ENCODE measurements at regions of chr5 and their contacts with region 1.

Region 1: GRCh38 chr5:172417983-172418630 is 36.2 kb downstream of the SH3PXD2B start:
- DNase-seq: peak; percentile 20
- ATAC-seq: no peak
- H3K4me3 ChIP-seq: no peak overlapping the region
- H3K27ac ChIP-seq: peak overlapping the region; percentile 5
- H3K4me1 ChIP-seq: peaks cover 81% of the 10 kb centered on the region
- H3K27me3 ChIP-seq: no peaks in the 10 kb centered on the region
- CTCF ChIP-seq: no peak
- EP300 ChIP-seq: no peak
- POLR2A ChIP-seq: no peak
- RAD21 ChIP-seq: no peak

Region 2: DNA sequence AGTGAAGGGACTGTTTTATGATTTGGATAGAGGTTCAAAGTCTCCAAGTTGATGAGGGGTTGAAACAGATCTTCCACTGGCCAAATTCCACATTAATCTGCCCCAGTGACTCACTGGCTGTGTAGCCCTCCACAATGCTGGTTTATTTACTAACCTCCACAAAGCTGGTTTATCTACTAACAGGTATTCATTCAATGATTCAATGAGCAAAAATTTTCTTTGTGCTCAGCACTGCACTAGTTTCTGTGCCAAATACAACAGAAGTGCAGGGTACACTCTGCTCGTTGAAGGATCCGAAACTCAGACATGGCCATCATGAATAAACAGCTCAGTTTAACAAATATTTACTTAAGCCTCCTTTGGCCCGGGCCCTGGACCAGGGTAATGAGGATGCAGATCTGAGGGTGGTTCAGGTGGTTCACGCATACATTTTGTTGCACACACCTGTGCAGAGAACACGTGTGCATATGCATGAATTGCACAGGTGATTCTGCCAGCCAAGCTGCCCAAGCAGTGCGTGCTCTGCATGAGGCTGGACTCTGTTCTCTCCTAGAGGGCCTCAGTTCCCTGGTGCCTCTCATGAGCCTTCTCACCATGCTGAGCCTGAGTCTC is 34.8 kb before region 1 on chr5:
- CTCF ChIA-PET with region 1: no interaction called
- POLR2A ChIA-PET with region 1: interaction called, 11 read pairs
- in situ Hi-C with region 1: no loop called
- intact Hi-C with region 1: loop called (anchors 1 kb)
- DNase-seq: peak; percentile 92
- ATAC-seq: peak; percentile 95
- H3K4me3 ChIP-seq: no peak overlapping the region
- H3K27ac ChIP-seq: peak overlapping the region; percentile 47
- H3K4me1 ChIP-seq: peaks cover 29% of the 10 kb centered on the region
- H3K27me3 ChIP-seq: no peaks in the 10 kb centered on the region
- CTCF ChIP-seq: no peak
- EP300 ChIP-seq: peak in 1 of 2 experiments; percentile 79; a peak in 2 of 4 replicates
- POLR2A ChIP-seq: no peak
- RAD21 ChIP-seq: no peak

Region 3: GRCh38 chr5:172428224-172429166 is 10.4 kb after region 1 on chr5:
- CTCF ChIA-PET with region 1: no interaction called
- POLR2A ChIA-PET with region 1: interaction called, 6 read pairs
- in situ Hi-C with region 1: no loop called
- intact Hi-C with region 1: loop called (anchors 1 kb)
- DNase-seq: peak; percentile 84
- ATAC-seq: peak; percentile 81
- H3K4me3 ChIP-seq: no peak overlapping the region
- H3K27ac ChIP-seq: no peak overlapping the region
- H3K4me1 ChIP-seq: peaks cover 52% of the 10 kb centered on the region
- H3K27me3 ChIP-seq: no peaks in the 10 kb centered on the region
- CTCF ChIP-seq: no peak
- EP300 ChIP-seq: peak in 1 of 2 experiments; percentile 56; a peak in 2 of 4 replicates
- POLR2A ChIP-seq: no peak
- RAD21 ChIP-seq: no peak

Region 4: DNA sequence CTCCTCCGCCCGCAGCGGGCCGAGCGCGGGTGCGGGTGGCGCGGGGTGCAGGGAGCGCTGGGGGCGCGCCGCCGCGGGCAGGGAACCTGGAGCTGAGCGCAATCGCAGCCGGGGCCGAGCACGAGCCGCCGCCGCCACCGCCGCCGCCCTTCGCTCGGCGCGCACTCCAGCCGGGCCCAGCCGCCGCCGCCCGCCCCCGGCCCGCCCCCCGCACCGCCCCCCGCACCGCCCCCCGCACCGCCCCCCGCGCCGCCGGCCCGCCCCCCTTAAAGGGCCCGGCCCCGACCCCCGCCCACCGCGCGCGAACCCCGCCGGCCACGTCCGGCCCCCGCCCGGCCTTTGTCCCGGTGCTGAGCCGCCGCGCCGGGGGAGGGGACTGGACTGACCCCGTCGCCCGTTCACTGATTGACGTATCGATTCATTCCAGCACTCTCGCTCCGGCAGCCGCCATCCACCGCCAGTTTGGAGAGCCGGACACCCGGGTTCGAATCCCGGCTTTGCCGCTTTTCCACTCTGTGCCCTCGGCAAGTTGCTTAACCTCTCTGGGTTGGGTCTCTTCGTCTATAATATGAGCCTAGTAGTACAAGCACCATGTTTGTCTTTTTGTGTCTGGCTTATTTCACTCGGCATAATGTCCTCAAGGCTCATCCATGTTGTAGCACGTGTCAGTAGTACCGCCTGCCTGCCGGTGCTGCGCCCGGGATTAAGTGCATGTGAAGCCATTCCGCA is 36.4 kb after region 1 on chr5 and contains the start of gene SH3PXD2B:
- CTCF ChIA-PET with region 1: no interaction called
- POLR2A ChIA-PET with region 1: no interaction called
- in situ Hi-C with region 1: loop called (anchors 5 kb)
- intact Hi-C with region 1: loop called (anchors 1 kb)
- DNase-seq: peak; percentile 52
- ATAC-seq: peak; percentile 59
- H3K4me3 ChIP-seq: peak within 1 kb of the TSS; percentile 68 to 81 (median 80)
- H3K27ac ChIP-seq: peak within 1 kb of the TSS; percentile 48
- H3K4me1 ChIP-seq: peaks cover 53% of the 10 kb centered on the region
- H3K27me3 ChIP-seq: no peaks in the 10 kb centered on the region; a peak in 2 of 5 replicates
- CTCF ChIP-seq: no peak
- EP300 ChIP-seq: no peak
- POLR2A ChIP-seq: peak in 1 of 2 experiments; percentile 66; a peak in 2 of 4 replicates
- RAD21 ChIP-seq: no peak; the same call in 1 of the 2 replicates
- total RNA-seq, gene SH3PXD2B: 3.4 and 3.8 TPM in 2 replicates